Aorta (tissue), 5 donors: ENCODE measurements at regions of chr3 and their contacts with region 1.

Region 1: GRCh38 chr3:86793786-86794185 is 197.2 kb downstream of the VGLL3 start:
- DNase-seq: no peak
- ATAC-seq: peak; percentile 92
- H3K4me3 ChIP-seq: no peak overlapping the region
- H3K27ac ChIP-seq: peak overlapping the region; percentile 79 to 93
- H3K4me1 ChIP-seq: peaks cover 0 to 3% of the 10 kb centered on the region in 2 donors
- H3K27me3 ChIP-seq: no peaks in the 10 kb centered on the region

Region 2: GRCh38 chr3:86684486-86684885 is 109.3 kb before region 1 on chr3:
- intact Hi-C with region 1: no loop called
- DNase-seq: no peak
- ATAC-seq: no peak
- H3K4me3 ChIP-seq: no peak overlapping the region
- H3K27ac ChIP-seq: no peak overlapping the region
- H3K4me1 ChIP-seq: no peaks in the 10 kb centered on the region
- H3K27me3 ChIP-seq: no peaks in the 10 kb centered on the region

Region 3: DNA sequence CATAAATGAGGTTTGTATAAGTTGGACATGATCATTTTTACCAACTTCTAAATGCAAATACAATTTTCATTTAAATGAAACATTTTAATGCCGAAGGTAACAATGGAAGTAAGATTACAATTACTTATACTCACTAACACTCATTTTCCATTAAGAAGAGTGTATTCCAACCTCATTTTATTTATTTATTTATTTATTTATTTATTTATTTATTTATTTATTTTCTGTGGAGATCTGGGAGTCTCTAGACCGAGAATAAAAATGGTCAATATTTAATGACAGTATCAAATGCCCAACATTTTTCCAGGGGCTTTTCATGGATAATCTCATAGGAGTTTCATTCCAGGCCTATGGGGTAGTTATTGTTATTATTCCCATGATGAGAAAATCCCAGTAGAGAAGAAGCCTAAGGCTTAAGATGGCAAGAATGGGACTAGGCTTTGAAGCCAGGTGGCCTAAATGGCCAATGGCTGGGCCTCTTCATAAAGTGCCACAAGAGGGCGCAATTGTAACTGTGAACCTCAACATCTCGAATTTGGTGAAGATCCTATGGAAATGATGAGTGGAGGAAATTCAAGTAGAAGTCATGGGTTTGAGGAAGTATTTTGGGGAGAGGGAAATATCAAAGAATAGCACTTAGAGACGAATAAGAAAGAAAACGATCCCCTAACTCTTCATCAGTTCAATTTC is 175.9 kb after region 1 on chr3:
- intact Hi-C with region 1: loop called in 1 of 2 experiments (anchors 10 kb)
- DNase-seq: no peak
- ATAC-seq: no peak
- H3K4me3 ChIP-seq: no peak overlapping the region
- H3K27ac ChIP-seq: no peak overlapping the region
- H3K4me1 ChIP-seq: peaks cover 0 to 4% of the 10 kb centered on the region in 2 donors
- H3K27me3 ChIP-seq: no peaks in the 10 kb centered on the region